ENCODE measurements at regions of chr5 and their contacts with region 1.

Region 1: DNA sequence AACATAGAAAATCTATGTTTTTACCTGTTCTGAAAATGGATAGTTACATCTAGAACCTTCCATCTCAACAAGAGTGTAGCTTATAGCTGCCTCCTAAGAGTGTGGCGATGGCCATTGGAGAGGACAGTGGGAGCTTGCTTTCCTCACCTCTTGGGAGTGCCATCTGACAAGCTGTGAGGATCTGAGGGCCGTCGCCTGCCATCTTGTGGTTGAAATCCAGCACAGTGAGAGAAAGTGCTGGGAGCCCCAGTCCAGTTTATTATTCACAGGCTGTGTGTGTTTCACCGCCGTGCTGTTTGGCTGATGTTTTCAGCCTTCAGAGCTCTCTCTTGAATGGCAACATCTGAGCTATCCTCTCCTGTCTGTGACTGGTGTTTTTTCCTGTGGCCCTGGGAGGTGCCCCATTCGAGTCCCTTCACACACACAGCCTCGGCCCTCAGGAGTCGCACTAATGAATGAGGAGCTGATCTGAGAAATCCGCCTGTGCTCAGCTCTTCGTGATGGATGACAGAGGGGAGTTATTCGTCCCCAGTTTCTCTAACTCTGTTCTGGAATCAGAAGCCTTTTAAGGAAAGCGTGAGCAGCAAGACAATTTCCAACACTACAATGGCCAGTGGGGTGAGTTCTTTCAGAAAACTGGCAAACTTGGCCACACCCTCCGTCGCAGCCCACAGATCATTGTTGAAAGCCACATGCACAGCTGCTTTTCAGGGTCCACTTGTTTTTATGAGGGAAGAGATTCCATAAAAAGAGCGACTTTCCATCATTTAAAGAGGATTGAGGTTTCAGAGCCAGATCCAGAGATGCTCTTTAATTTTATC is 170.3 kb downstream of the PDZD2 start:
- DNase-seq: peak; percentile 64
- H3K4me3 ChIP-seq: no peak overlapping the region
- H3K27ac ChIP-seq: no peak overlapping the region
- H3K4me1 ChIP-seq: no peaks in the 10 kb centered on the region
- H3K27me3 ChIP-seq: no peaks in the 10 kb centered on the region
- CTCF ChIP-seq: peak; percentile 48 to 73 (median 69)
- POLR2A ChIP-seq: no peak

Region 2: GRCh38 chr5:31449174-31449573 is 360.1 kb before region 1 on chr5:
- intact Hi-C with region 1: no loop called
- DNase-seq: no peak
- H3K4me3 ChIP-seq: no peak overlapping the region
- H3K27ac ChIP-seq: no peak overlapping the region
- H3K4me1 ChIP-seq: no peaks in the 10 kb centered on the region
- H3K27me3 ChIP-seq: no peaks in the 10 kb centered on the region
- CTCF ChIP-seq: no peak
- POLR2A ChIP-seq: no peak

Region 3: GRCh38 chr5:31581498-31582099 is 227.7 kb before region 1 on chr5:
- intact Hi-C with region 1: loop called (anchors 2 kb)
- DNase-seq: no peak
- H3K4me3 ChIP-seq: no peak overlapping the region
- H3K27ac ChIP-seq: no peak overlapping the region
- H3K4me1 ChIP-seq: no peaks in the 10 kb centered on the region
- H3K27me3 ChIP-seq: no peaks in the 10 kb centered on the region
- CTCF ChIP-seq: peak in 3 of 4 experiments; percentile 58 to 70 (median 62)
- POLR2A ChIP-seq: no peak

Measured in prostate gland (tissue), 2 donors.